CD4-positive, alpha-beta T cell (primary cell): ENCODE measurements at regions of chr4 and their contacts with region 1.

Region 1: GRCh38 chr4:182806259-182807252 is 110.6 kb downstream of the DCTD start:
- DNase-seq: peak; percentile 26 to 75 (median 50)
- ATAC-seq: peak; percentile 26
- H3K4me3 ChIP-seq: peak overlapping the region; percentile 39
- H3K4me3 Mint-ChIP-seq: peak overlapping the region; percentile 85
- H3K27ac ChIP-seq: no peak overlapping the region
- H3K27ac Mint-ChIP-seq: no peak overlapping the region
- H3K4me1 ChIP-seq: peaks cover 30% of the 10 kb centered on the region
- H3K4me1 Mint-ChIP-seq: peaks cover 6% of the 10 kb centered on the region
- H3K27me3 ChIP-seq: no peaks in the 10 kb centered on the region
- H3K27me3 Mint-ChIP-seq: no peaks in the 10 kb centered on the region
- CTCF ChIP-seq: peak; percentile 88

Region 2: GRCh38 chr4:181143250-181143854 is 1663.2 kb before region 1 on chr4:
- CTCF ChIA-PET with region 1: no interaction called
- POLR2A ChIA-PET with region 1: no interaction called
- intact Hi-C with region 1: loop called (anchors 5 kb)
- DNase-seq: peak; percentile 37 to 75 (median 50)
- ATAC-seq: peak; percentile 41
- H3K4me3 ChIP-seq: no peak overlapping the region
- H3K4me3 Mint-ChIP-seq: no peak overlapping the region
- H3K27ac ChIP-seq: no peak overlapping the region
- H3K27ac Mint-ChIP-seq: no peak overlapping the region
- H3K4me1 ChIP-seq: no peaks in the 10 kb centered on the region
- H3K4me1 Mint-ChIP-seq: no peaks in the 10 kb centered on the region
- H3K27me3 ChIP-seq: no peaks in the 10 kb centered on the region
- H3K27me3 Mint-ChIP-seq: peaks cover 15% of the 10 kb centered on the region
- CTCF ChIP-seq: peak; percentile 86

Region 3: GRCh38 chr4:182478475-182478874 is 328.1 kb before region 1 on chr4:
- CTCF ChIA-PET with region 1: no interaction called
- POLR2A ChIA-PET with region 1: no interaction called
- intact Hi-C with region 1: loop called in 1 of 2 experiments (anchors 5 kb)
- DNase-seq: peak in 3 of 14 experiments; percentile 20 to 42 (median 21)
- ATAC-seq: no peak
- H3K4me3 ChIP-seq: no peak overlapping the region
- H3K4me3 Mint-ChIP-seq: no peak overlapping the region
- H3K27ac ChIP-seq: no peak overlapping the region
- H3K27ac Mint-ChIP-seq: no peak overlapping the region
- H3K4me1 ChIP-seq: no peaks in the 10 kb centered on the region
- H3K4me1 Mint-ChIP-seq: no peaks in the 10 kb centered on the region
- H3K27me3 ChIP-seq: peaks cover 0 to 5% of the 10 kb centered on the region in 2 experiments
- H3K27me3 Mint-ChIP-seq: peaks cover 22% of the 10 kb centered on the region
- CTCF ChIP-seq: peak; percentile 81